ENCODE measurements at regions of chr5 and their contacts with region 1.

Region 1: GRCh38 chr5:138464008-138464387 is 1.3 kb upstream of the EGR1 start:
- DNase-seq: peak; percentile 86
- ATAC-seq: peak; percentile 68
- H3K4me3 ChIP-seq: peak overlapping the region; percentile 69 to 91 (median 78)
- H3K27ac ChIP-seq: peak overlapping the region; percentile 95
- H3K4me1 ChIP-seq: peaks cover 50% of the 10 kb centered on the region
- H3K27me3 ChIP-seq: peaks cover 0 to 3% of the 10 kb centered on the region in 2 experiments; a peak in 1 of 5 replicates
- CTCF ChIP-seq: peak; percentile 90
- EP300 ChIP-seq: peak in 1 of 2 experiments; percentile 53; a peak in 1 of 4 replicates
- POLR2A ChIP-seq: no peak
- RAD21 ChIP-seq: peak; percentile 95

Region 2: GRCh38 chr5:138449501-138450239 is 14.3 kb before region 1 on chr5:
- CTCF ChIA-PET with region 1: interaction called, 4 read pairs
- POLR2A ChIA-PET with region 1: interaction called, 11 read pairs
- in situ Hi-C with region 1: no loop called
- intact Hi-C with region 1: no loop called
- DNase-seq: peak; percentile 63
- ATAC-seq: peak; percentile 86
- H3K4me3 ChIP-seq: peak overlapping the region; percentile 11 to 65 (median 24); a peak in 4 of 6 replicates
- H3K27ac ChIP-seq: no peak overlapping the region
- H3K4me1 ChIP-seq: peaks cover 40% of the 10 kb centered on the region
- H3K27me3 ChIP-seq: peaks cover 4 to 26% of the 10 kb centered on the region in 2 experiments; a peak in 3 of 5 replicates
- CTCF ChIP-seq: peak; percentile 99
- EP300 ChIP-seq: no peak
- POLR2A ChIP-seq: no peak
- RAD21 ChIP-seq: peak; percentile 94

Region 3: GRCh38 chr5:138491669-138492559 is 27.9 kb after region 1 on chr5:
- CTCF ChIA-PET with region 1: interaction called, 4 read pairs
- POLR2A ChIA-PET with region 1: interaction called, 58 read pairs
- in situ Hi-C with region 1: no loop called
- intact Hi-C with region 1: loop called (anchors 1 kb)
- DNase-seq: peak; percentile 72
- ATAC-seq: peak; percentile 84
- H3K4me3 ChIP-seq: peak overlapping the region; percentile 75 to 82 (median 79)
- H3K27ac ChIP-seq: peak overlapping the region; percentile 87
- H3K4me1 ChIP-seq: peaks cover 53% of the 10 kb centered on the region
- H3K27me3 ChIP-seq: peaks cover 4 to 35% of the 10 kb centered on the region in 2 experiments; a peak in 4 of 5 replicates
- CTCF ChIP-seq: peak; percentile 2; the same call in 1 of the 2 replicates
- EP300 ChIP-seq: no peak
- POLR2A ChIP-seq: peak in 1 of 2 experiments; percentile 72; a peak in 3 of 4 replicates
- RAD21 ChIP-seq: 0 out of 2 replicates have a peak, but pooled peaks have one; percentile 4